ENCODE measurements at regions of chr2 and their contacts with region 1.

Region 1: GRCh38 chr2:13006829-13007717 is 290.3 kb downstream of the TRIB2 start:
- DNase-seq: peak; percentile 68
- H3K4me3 Mint-ChIP-seq: no peak overlapping the region
- H3K27ac Mint-ChIP-seq: no peak overlapping the region
- H3K4me1 Mint-ChIP-seq: peaks cover 2% of the 10 kb centered on the region
- H3K27me3 Mint-ChIP-seq: peaks cover 16% of the 10 kb centered on the region

Region 2: GRCh38 chr2:11829947-11830707 is 1176.9 kb before region 1 on chr2:
- CTCF ChIA-PET with region 1: interaction called, 11 read pairs
- POLR2A ChIA-PET with region 1: interaction called, 4 read pairs
- DNase-seq: peak; percentile 64
- H3K4me3 Mint-ChIP-seq: peak overlapping the region; percentile 52
- H3K27ac Mint-ChIP-seq: peak overlapping the region; percentile 13
- H3K4me1 Mint-ChIP-seq: peaks cover 29% of the 10 kb centered on the region
- H3K27me3 Mint-ChIP-seq: peaks cover 51% of the 10 kb centered on the region

Region 3: DNA sequence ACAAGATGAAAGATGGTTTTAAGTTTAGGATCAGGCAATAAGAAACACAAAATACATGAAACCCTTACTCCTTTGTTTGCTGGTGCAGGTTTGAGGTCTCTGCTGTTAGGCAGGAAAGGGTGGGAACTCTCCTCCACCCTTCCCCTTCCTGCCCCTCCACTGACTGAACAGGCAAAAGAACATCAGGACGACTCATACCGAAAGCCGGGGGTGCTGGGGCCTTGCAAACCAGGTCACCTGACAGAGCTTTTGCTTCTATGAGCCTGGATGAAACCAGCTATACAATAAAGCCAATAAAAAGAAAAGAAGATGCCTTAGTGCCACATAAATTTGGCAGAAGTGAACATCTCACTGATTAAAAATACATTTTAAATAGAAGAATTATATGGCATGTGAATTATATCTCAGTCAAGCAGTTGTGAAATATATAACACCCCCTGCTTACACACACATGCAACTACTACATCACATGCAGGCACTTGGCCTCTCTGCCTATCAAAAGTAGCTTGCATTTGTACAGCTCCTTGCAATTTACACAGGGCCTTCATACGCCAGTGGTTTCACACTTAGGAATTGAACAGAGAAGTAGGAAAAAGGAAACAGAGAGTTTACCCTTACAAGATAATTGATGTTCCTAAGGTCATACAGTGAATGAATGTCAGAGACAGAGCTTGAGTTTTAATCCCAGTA is 505.5 kb before region 1 on chr2:
- CTCF ChIA-PET with region 1: interaction called, 10 read pairs
- POLR2A ChIA-PET with region 1: no interaction called
- DNase-seq: peak; percentile 90
- H3K4me3 Mint-ChIP-seq: peak overlapping the region; percentile 28
- H3K27ac Mint-ChIP-seq: peak overlapping the region; percentile 89
- H3K4me1 Mint-ChIP-seq: peaks cover 96% of the 10 kb centered on the region
- H3K27me3 Mint-ChIP-seq: no peaks in the 10 kb centered on the region

Region 4: GRCh38 chr2:12728221-12728777 is 278.8 kb before region 1 on chr2:
- CTCF ChIA-PET with region 1: interaction called, 19 read pairs
- POLR2A ChIA-PET with region 1: interaction called, 3 read pairs
- DNase-seq: peak; percentile 81
- H3K4me3 Mint-ChIP-seq: peak overlapping the region; percentile 28
- H3K27ac Mint-ChIP-seq: peak overlapping the region; percentile 73
- H3K4me1 Mint-ChIP-seq: peaks cover 66% of the 10 kb centered on the region
- H3K27me3 Mint-ChIP-seq: no peaks in the 10 kb centered on the region

Region 5: GRCh38 chr2:12948961-12949353 is 58.1 kb before region 1 on chr2:
- CTCF ChIA-PET with region 1: interaction called, 11 read pairs
- POLR2A ChIA-PET with region 1: no interaction called
- DNase-seq: no peak
- H3K4me3 Mint-ChIP-seq: no peak overlapping the region
- H3K27ac Mint-ChIP-seq: no peak overlapping the region
- H3K4me1 Mint-ChIP-seq: peaks cover 9% of the 10 kb centered on the region
- H3K27me3 Mint-ChIP-seq: peaks cover 29% of the 10 kb centered on the region